ENCODE measurements at regions of chr1 and their contacts with region 1.

Region 1: GRCh38 chr1:23539698-23540266 is 8.7 kb upstream of the E2F2 start:
- DNase-seq: peak; percentile 91
- ATAC-seq: peak; percentile 87

Region 2: GRCh38 chr1:23496490-23497181 is 43.1 kb before region 1 on chr1:
- intact Hi-C with region 1: loop called (anchors 1 kb)
- DNase-seq: no peak
- ATAC-seq: no peak